A673 (cell line): ENCODE measurements at regions of chr9 and their contacts with region 1.

Region 1: DNA sequence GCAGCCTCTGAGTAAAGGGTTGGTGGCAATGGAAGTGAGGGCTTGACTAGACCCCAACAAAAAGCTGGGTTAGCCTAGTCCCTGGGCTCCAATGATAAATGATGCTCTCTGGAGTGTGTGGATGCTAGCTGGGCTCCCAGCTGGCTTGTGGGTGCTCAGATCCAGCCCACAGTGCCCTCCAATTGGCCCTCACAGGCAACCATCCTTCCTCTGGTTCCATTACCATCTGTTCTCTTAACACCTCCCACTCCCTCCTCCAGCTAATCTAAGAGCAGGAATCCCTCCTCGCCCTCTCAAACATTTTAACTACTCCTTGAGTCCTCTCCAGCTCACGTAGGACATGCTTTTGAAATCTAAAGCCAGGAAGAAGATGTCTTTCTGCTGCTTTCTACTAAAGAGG is 25.2 kb upstream of the FRMD3 start:
- DNase-seq: no peak
- H3K4me3 ChIP-seq: no peak overlapping the region
- H3K27ac ChIP-seq: no peak overlapping the region
- H3K4me1 ChIP-seq: no peaks in the 10 kb centered on the region
- H3K27me3 ChIP-seq: no peaks in the 10 kb centered on the region
- CTCF ChIP-seq: no peak

Region 2: DNA sequence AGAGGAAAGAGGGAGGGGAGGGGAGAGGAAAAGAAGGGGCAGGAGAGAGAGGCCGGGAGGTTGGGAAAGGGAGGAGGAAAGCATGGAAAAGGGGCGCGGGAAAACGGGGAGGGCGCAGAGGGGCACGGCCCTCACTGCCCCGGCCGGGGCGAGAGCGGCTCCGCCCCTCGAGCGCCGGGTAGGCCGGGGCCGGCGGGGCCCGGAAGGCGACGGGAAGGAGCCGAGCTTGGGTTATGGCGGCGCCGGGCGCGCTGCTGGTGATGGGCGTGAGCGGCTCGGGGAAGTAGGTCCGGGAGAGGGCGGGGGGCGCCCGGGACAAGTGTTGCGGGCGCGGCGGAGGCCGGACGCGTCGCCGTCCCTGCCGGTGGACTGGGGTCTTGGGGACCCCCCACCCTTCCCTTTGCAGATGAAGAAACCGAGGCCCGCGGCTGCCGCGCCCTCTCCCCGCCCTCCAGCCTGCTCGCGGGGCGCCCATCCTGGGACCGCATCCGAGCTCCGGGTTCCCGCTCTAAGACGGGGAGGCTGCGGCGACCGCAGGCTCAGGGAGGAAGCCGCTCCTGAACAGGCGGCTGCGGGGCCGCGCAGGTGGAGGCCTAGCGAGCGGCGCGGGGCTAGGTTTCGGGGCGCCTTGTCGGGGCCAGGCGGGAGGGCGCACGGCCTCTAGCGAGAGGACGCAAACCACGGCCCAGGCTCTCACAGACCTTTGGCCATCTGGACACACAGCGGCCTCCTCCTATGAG is 59.7 kb after region 1 on chr9 and contains the start of gene IDNK:
- CTCF ChIA-PET with region 1: no interaction called
- POLR2A ChIA-PET with region 1: no interaction called
- intact Hi-C with region 1: no loop called
- DNase-seq: peak; percentile 23
- H3K4me3 ChIP-seq: peak within 1 kb of the TSS; percentile 68
- H3K27ac ChIP-seq: peak within 1 kb of the TSS; percentile 89
- H3K4me1 ChIP-seq: peaks cover 19% of the 10 kb centered on the region
- H3K27me3 ChIP-seq: no peaks in the 10 kb centered on the region
- CTCF ChIP-seq: no peak
- total RNA-seq, gene IDNK: 1.6 and 1.7 TPM in 2 replicates

Region 3: GRCh38 chr9:83636813-83637212 is 73.5 kb after region 1 on chr9:
- CTCF ChIA-PET with region 1: interaction called, 13 read pairs
- POLR2A ChIA-PET with region 1: no interaction called
- intact Hi-C with region 1: no loop called
- DNase-seq: no peak
- H3K4me3 ChIP-seq: no peak overlapping the region
- H3K27ac ChIP-seq: no peak overlapping the region
- H3K4me1 ChIP-seq: peaks cover 3% of the 10 kb centered on the region
- H3K27me3 ChIP-seq: no peaks in the 10 kb centered on the region
- CTCF ChIP-seq: no peak

Region 4: DNA sequence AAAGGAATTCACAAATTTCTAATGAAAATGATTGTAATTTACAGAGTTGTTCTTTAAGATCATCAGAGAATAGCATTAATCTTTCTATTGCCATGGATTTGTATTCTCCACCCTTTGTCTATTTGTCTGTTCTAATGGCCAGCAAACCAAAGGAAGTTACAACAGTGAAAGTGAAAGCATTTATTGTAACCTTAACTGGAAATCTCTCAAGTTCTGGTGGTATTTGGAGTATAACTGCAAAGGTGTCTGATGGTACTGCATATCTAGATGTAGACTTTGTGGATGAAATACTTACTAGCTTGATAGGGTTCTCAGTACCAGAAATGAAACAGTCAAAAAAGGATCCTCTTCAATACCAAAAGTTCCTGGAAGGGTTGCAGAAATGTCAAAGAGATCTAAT is 439.0 kb after region 1 on chr9:
- CTCF ChIA-PET with region 1: no interaction called
- POLR2A ChIA-PET with region 1: no interaction called
- intact Hi-C with region 1: no loop called
- DNase-seq: no peak
- H3K4me3 ChIP-seq: no peak overlapping the region
- H3K27ac ChIP-seq: no peak overlapping the region
- H3K4me1 ChIP-seq: no peaks in the 10 kb centered on the region
- H3K27me3 ChIP-seq: no peaks in the 10 kb centered on the region
- CTCF ChIP-seq: no peak